PC-9 (cell line): ENCODE measurements at regions of chr10 and their contacts with region 1.

Region 1: GRCh38 chr10:3494131-3494837 is 290.7 kb downstream of the KLF6 start:
- DNase-seq: peak; percentile 50 to 75
- H3K4me3 ChIP-seq: peak overlapping the region; percentile 32
- H3K27ac ChIP-seq: peak overlapping the region; percentile 81
- H3K4me1 ChIP-seq: peaks cover 18% of the 10 kb centered on the region
- H3K27me3 ChIP-seq: no peaks in the 10 kb centered on the region
- CTCF ChIP-seq: no peak

Region 2: GRCh38 chr10:3525832-3526449 is 31.7 kb after region 1 on chr10:
- CTCF ChIA-PET with region 1: no interaction called
- POLR2A ChIA-PET with region 1: no interaction called
- intact Hi-C with region 1: loop called (anchors 5 kb)
- DNase-seq: peak; percentile 55 to 71
- H3K4me3 ChIP-seq: no peak overlapping the region
- H3K27ac ChIP-seq: 0 out of 2 replicates have a peak overlapping the region, but pooled peaks have one; percentile 21
- H3K4me1 ChIP-seq: peaks cover 4% of the 10 kb centered on the region; the same call in 1 of the 2 replicates
- H3K27me3 ChIP-seq: no peaks in the 10 kb centered on the region
- CTCF ChIP-seq: no peak

Region 3: GRCh38 chr10:3906511-3907111 is 412.3 kb after region 1 on chr10:
- CTCF ChIA-PET with region 1: no interaction called
- POLR2A ChIA-PET with region 1: no interaction called
- intact Hi-C with region 1: no loop called
- DNase-seq: no peak
- H3K4me3 ChIP-seq: no peak overlapping the region
- H3K27ac ChIP-seq: no peak overlapping the region
- H3K4me1 ChIP-seq: no peaks in the 10 kb centered on the region
- H3K27me3 ChIP-seq: no peaks in the 10 kb centered on the region
- CTCF ChIP-seq: no peak